ENCODE measurements at regions of chr12 and their contacts with region 1.

Region 1: GRCh38 chr12:106541201-106541600 is 41.6 kb upstream of the RFX4 start:
- DNase-seq: no peak
- ATAC-seq: no peak
- H3K4me3 ChIP-seq: no peak overlapping the region
- H3K4me3 Mint-ChIP-seq: no peak overlapping the region
- H3K27ac ChIP-seq: no peak overlapping the region
- H3K27ac Mint-ChIP-seq: no peak overlapping the region
- H3K4me1 ChIP-seq: no peaks in the 10 kb centered on the region
- H3K4me1 Mint-ChIP-seq: no peaks in the 10 kb centered on the region
- H3K27me3 ChIP-seq: peaks cover 0 to 2% of the 10 kb centered on the region in 2 experiments
- H3K27me3 Mint-ChIP-seq: peaks cover 1% of the 10 kb centered on the region in 2 donors

Region 2: GRCh38 chr12:105935981-105936380 is 605.2 kb before region 1 on chr12:
- CTCF ChIA-PET with region 1: no interaction called
- POLR2A ChIA-PET with region 1: no interaction called
- DNase-seq: peak in 3 of 35 experiments; percentile 3 to 5 (median 3)
- ATAC-seq: peak in 1 of 4 experiments; percentile 35
- H3K4me3 ChIP-seq: no peak overlapping the region
- H3K4me3 Mint-ChIP-seq: no peak overlapping the region
- H3K27ac ChIP-seq: no peak overlapping the region
- H3K27ac Mint-ChIP-seq: no peak overlapping the region
- H3K4me1 ChIP-seq: no peaks in the 10 kb centered on the region
- H3K4me1 Mint-ChIP-seq: no peaks in the 10 kb centered on the region
- H3K27me3 ChIP-seq: no peaks in the 10 kb centered on the region
- H3K27me3 Mint-ChIP-seq: peaks cover 3 to 6% of the 10 kb centered on the region in 2 donors

Region 3: DNA sequence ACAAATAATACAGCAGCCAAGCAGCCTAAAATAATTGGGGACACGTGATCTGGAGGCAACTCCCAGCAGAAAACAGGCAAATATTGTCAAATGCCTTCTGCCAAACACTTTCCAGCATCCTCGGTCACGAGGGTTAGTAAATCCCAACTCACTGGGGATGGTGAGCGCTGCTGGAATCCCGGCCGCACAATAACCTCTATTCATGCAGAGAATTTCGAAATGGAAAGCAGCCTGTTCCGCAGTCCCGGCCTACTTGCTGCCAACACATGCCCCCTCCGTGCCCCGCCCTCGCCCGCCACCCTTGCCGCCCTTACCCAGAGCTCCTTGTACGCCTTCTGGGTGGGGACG is 103.8 kb after region 1 on chr12:
- CTCF ChIA-PET with region 1: no interaction called
- POLR2A ChIA-PET with region 1: no interaction called
- DNase-seq: no peak
- ATAC-seq: no peak
- H3K4me3 ChIP-seq: no peak overlapping the region
- H3K4me3 Mint-ChIP-seq: no peak overlapping the region
- H3K27ac ChIP-seq: no peak overlapping the region
- H3K27ac Mint-ChIP-seq: no peak overlapping the region
- H3K4me1 ChIP-seq: no peaks in the 10 kb centered on the region
- H3K4me1 Mint-ChIP-seq: no peaks in the 10 kb centered on the region
- H3K27me3 ChIP-seq: peaks cover 2 to 5% of the 10 kb centered on the region in 2 experiments
- H3K27me3 Mint-ChIP-seq: peaks cover 3 to 16% of the 10 kb centered on the region in 2 donors

Region 4: GRCh38 chr12:106955377-106956047 is 414.3 kb after region 1 on chr12 and contains the start of gene TMEM263:
- CTCF ChIA-PET with region 1: no interaction called
- POLR2A ChIA-PET with region 1: no interaction called
- DNase-seq: peak; percentile 73 to 96 (median 86)
- ATAC-seq: peak; percentile 79 to 88 (median 86)
- H3K4me3 ChIP-seq: peak within 1 kb of the TSS; percentile 80 to 98
- H3K4me3 Mint-ChIP-seq: peak within 1 kb of the TSS; percentile 95 to 99 (median 97)
- H3K27ac ChIP-seq: peak within 1 kb of the TSS; percentile 86
- H3K27ac Mint-ChIP-seq: peak within 1 kb of the TSS; percentile 91
- H3K4me1 ChIP-seq: peaks cover 11 to 16% of the 10 kb centered on the region in 2 experiments
- H3K4me1 Mint-ChIP-seq: peaks cover 30 to 46% (median 35%) of the 10 kb centered on the region in 3 donors
- H3K27me3 ChIP-seq: no peaks in the 10 kb centered on the region
- H3K27me3 Mint-ChIP-seq: no peaks in the 10 kb centered on the region
- total RNA-seq, gene TMEM263: 29.8 to 36.5 (median 31.2) TPM

Region 5: GRCh38 chr12:107645630-107646333 is 1104.6 kb after region 1 on chr12:
- CTCF ChIA-PET with region 1: interaction called in 1 of 2 experiments, 11 read pairs
- POLR2A ChIA-PET with region 1: no interaction called
- DNase-seq: no peak
- ATAC-seq: no peak
- H3K4me3 ChIP-seq: no peak overlapping the region
- H3K4me3 Mint-ChIP-seq: no peak overlapping the region
- H3K27ac ChIP-seq: no peak overlapping the region
- H3K27ac Mint-ChIP-seq: no peak overlapping the region
- H3K4me1 ChIP-seq: no peaks in the 10 kb centered on the region
- H3K4me1 Mint-ChIP-seq: no peaks in the 10 kb centered on the region
- H3K27me3 ChIP-seq: no peaks in the 10 kb centered on the region
- H3K27me3 Mint-ChIP-seq: no peaks in the 10 kb centered on the region